Activated CD4-positive, alpha-beta T cell treated with anti-CD3 and anti-CD28 coated beads, Interleukin-2, amount 10 ng/mL, durations not matched to agents 24 days and 14 days (primary cell): ENCODE measurements at regions of chr3 and their contacts with region 1.

Region 1: DNA sequence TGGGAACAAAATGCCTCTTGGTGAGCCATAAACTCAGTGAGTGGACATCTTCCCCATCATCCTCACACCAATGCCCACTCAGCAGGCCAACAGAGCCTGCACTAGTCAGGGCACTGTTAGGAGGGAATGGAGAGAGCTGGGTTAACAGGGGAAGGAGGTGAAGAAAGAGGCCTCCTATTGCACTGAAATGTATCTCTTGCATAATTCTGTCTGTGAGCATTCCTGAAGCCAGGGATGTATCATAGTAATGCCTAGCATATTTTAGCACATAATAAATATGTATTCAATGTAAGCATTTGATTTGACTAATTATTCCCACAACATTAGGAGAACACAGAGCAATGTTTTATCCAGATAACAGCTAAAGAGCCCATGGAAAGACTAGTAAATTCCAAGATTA is 81.2 kb downstream of the ANO10 start:
- DNase-seq: no peak
- H3K4me3 Mint-ChIP-seq: no peak overlapping the region
- H3K27ac Mint-ChIP-seq: no peak overlapping the region
- H3K4me1 Mint-ChIP-seq: no peaks in the 10 kb centered on the region
- H3K27me3 Mint-ChIP-seq: peaks cover 1% of the 10 kb centered on the region

Region 2: DNA sequence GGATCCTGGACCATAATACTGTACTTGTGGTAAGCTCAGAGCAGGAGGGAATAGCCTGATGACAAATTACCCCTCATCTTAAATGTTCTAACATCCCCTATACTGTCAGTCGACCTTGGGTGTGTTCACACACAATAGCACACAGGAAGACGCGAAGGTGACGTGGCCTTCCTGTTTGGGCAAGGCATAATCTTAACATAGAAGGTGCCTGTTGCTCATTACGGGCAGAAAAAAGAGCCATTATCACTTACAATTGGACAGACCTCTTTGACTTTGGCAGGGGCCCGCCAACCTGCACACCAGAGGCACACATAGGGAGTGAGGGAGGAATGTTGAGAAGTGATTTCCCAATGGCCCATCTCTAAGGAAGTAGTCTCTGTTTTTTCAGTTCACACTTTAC is 63.0 kb before region 1 on chr3:
- intact Hi-C with region 1: no loop called
- DNase-seq: peak; percentile 81
- H3K4me3 Mint-ChIP-seq: peak overlapping the region; percentile 45
- H3K27ac Mint-ChIP-seq: peak overlapping the region; percentile 78
- H3K4me1 Mint-ChIP-seq: peaks cover 17% of the 10 kb centered on the region
- H3K27me3 Mint-ChIP-seq: peaks cover 6% of the 10 kb centered on the region

Region 3: GRCh38 chr3:43638594-43639447 is 98.2 kb after region 1 on chr3:
- intact Hi-C with region 1: loop called (anchors 1 kb)
- DNase-seq: peak; percentile 83
- H3K4me3 Mint-ChIP-seq: no peak overlapping the region
- H3K27ac Mint-ChIP-seq: no peak overlapping the region
- H3K4me1 Mint-ChIP-seq: peaks cover 5% of the 10 kb centered on the region
- H3K27me3 Mint-ChIP-seq: peaks cover 15% of the 10 kb centered on the region

Region 4: DNA sequence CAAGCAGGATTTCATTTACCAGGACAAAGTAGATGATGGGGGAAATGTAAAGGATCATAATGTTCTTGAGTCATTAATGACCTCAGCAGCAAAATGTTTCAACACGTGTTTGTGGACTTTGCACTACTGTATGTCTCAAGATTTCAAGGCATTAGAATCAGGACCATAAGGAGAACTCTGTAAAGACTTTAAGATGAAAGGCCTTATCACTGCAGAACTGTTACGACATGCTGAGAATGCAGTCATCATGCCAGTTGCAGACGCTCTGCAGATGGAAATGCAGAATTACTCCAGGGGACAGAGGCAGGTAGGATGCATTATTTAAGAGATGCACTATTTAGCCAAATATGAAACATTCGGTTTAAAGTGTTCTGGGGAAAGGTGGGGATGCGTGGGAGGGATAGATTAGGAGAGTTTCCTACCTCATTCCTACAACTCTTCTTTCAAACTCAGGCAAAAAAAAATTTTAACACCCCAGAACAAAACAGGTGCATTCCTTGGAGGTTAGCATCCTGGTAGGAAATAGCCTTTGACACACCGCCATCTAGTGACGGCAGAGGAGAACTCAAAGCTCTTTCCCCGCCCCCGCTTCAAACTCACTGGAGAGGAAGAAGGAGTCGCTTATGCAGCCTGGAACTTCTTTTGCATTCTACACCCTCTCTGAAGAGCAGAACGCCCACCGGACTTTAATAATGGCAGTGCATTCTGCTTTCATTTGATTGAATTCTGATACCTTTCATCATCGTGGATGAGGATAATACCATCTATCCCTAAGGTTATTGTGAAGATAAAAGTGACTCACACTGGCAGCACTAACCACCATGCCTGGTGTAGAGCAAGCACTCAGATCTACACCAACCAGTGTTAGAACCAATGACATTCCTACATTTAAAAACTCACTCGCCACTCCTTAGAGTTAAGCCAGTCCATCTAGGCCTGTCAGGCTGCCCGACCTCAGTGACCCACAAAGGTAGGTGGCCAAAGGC is 658.0 kb after region 1 on chr3:
- intact Hi-C with region 1: loop called (anchors 1 kb)
- DNase-seq: peak; percentile 90
- H3K4me3 Mint-ChIP-seq: no peak overlapping the region
- H3K27ac Mint-ChIP-seq: no peak overlapping the region
- H3K4me1 Mint-ChIP-seq: no peaks in the 10 kb centered on the region
- H3K27me3 Mint-ChIP-seq: peaks cover 18% of the 10 kb centered on the region